Naive thymus-derived CD4-positive, alpha-beta T cell (primary cell): ENCODE measurements at regions of chr16 and their contacts with region 1.

Region 1: GRCh38 chr16:278863-279366 is 1.5 kb upstream of the ARHGDIG start:
- DNase-seq: peak in 7 of 9 donors; percentile 18 to 62 (median 47)
- ATAC-seq: peak; percentile 67
- H3K4me3 ChIP-seq: no peak overlapping the region
- H3K4me3 Mint-ChIP-seq: peak overlapping the region in 4 of 10 donors; percentile 0 to 45 (median 8)
- H3K27ac ChIP-seq: no peak overlapping the region
- H3K27ac Mint-ChIP-seq: no peak overlapping the region
- H3K4me1 ChIP-seq: peaks cover 0 to 7% of the 10 kb centered on the region in 2 donors
- H3K4me1 Mint-ChIP-seq: peaks cover 0 to 12% (median 8%) of the 10 kb centered on the region in 7 donors
- H3K27me3 ChIP-seq: peaks cover 0 to 3% of the 10 kb centered on the region in 2 donors
- H3K27me3 Mint-ChIP-seq: peaks cover 5 to 44% (median 13%) of the 10 kb centered on the region in 5 donors

Region 2: GRCh38 chr16:239953-240287 is 39.0 kb before region 1 on chr16:
- CTCF ChIA-PET with region 1: no interaction called
- POLR2A ChIA-PET with region 1: no interaction called
- intact Hi-C with region 1: loop called in 1 of 2 experiments (anchors 5 kb)
- DNase-seq: no peak
- ATAC-seq: no peak
- H3K4me3 ChIP-seq: no peak overlapping the region
- H3K4me3 Mint-ChIP-seq: no peak overlapping the region
- H3K27ac ChIP-seq: no peak overlapping the region
- H3K27ac Mint-ChIP-seq: peak overlapping the region in 2 of 9 donors; percentile 22 to 47
- H3K4me1 ChIP-seq: peaks cover 0 to 5% of the 10 kb centered on the region in 2 donors
- H3K4me1 Mint-ChIP-seq: peaks cover 7 to 37% (median 23%) of the 10 kb centered on the region in 7 donors
- H3K27me3 ChIP-seq: no peaks in the 10 kb centered on the region
- H3K27me3 Mint-ChIP-seq: peaks cover 0 to 5% (median 0%) of the 10 kb centered on the region in 5 donors

Region 3: DNA sequence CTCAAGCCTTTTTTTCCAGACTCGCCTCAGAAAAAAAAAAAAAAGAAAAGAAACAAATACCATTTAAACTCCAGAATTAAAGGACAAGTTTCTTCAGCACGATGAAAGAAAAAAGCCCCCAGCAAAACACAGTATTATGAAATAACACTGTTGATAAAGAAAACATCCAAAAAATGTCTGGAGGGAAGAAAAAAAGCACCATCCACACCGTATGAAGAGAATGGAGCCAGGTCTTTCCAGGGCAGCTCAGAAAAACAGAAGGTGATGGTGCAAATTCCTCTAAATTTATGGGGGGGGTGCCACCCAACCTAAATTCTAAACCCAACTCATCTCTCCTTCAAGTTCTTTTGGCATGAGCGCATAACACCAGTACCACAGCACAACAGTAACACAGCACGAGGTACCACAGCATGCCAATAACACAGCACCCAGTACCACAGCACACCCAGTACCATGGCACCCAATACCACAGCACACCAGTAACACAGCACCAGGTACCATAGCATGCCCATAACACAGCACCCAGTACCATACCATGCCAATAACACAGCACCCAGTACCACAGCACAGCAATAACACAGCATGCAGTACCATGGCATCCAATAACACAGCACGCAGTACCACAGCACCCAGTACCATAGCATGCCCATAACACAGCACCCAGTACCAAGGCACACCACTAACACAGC is 54.6 kb after region 1 on chr16:
- CTCF ChIA-PET with region 1: no interaction called
- POLR2A ChIA-PET with region 1: no interaction called
- intact Hi-C with region 1: no loop called
- DNase-seq: no peak
- ATAC-seq: no peak
- H3K4me3 ChIP-seq: no peak overlapping the region
- H3K4me3 Mint-ChIP-seq: peak overlapping the region in 2 of 10 donors; percentile 32 to 60
- H3K27ac ChIP-seq: no peak overlapping the region
- H3K27ac Mint-ChIP-seq: peak overlapping the region in 1 of 9 donors; percentile 76
- H3K4me1 ChIP-seq: peaks cover 17 to 33% of the 10 kb centered on the region in 2 donors
- H3K4me1 Mint-ChIP-seq: peaks cover 20 to 78% (median 58%) of the 10 kb centered on the region in 7 donors
- H3K27me3 ChIP-seq: no peaks in the 10 kb centered on the region
- H3K27me3 Mint-ChIP-seq: peaks cover 0 to 4% (median 0%) of the 10 kb centered on the region in 5 donors